ENCODE measurements at regions of chr18 and their contacts with region 1.

Region 1: GRCh38 chr18:43587538-43588153 is 310.4 kb upstream of the SYT4 start:
- DNase-seq: no peak
- H3K4me3 Mint-ChIP-seq: no peak overlapping the region
- H3K27ac Mint-ChIP-seq: no peak overlapping the region
- H3K4me1 Mint-ChIP-seq: no peaks in the 10 kb centered on the region
- H3K27me3 Mint-ChIP-seq: no peaks in the 10 kb centered on the region

Region 2: DNA sequence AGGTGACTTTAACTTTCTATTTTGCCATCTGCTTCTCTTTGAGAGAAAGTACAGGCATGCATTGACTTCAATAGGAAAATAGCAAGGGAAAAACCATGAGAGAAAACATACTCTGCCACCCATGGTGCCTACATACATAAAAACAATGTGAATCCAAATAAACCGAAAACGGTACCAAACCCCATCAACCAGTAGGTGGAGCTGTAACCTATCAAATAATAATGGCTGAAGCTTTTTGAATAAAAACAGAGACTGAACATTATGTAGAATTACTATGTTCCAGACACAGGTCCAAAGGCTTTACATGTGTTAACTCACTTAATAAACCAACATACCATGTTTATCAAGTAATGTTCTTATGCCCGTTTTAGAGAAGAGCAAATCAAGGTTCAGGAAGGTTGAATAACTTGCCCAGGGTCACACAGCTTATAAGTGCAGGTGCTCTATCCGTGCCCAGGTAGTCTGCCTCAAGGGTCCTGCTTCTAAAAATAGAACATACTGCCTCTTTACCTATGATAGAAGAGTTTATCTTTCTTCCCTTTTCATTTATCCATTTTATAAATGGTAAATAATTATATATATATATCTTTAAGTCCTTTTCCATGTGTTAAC is 16.5 kb before region 1 on chr18:
- intact Hi-C with region 1: loop called (anchors 2 kb)
- DNase-seq: no peak
- H3K4me3 Mint-ChIP-seq: no peak overlapping the region
- H3K27ac Mint-ChIP-seq: no peak overlapping the region
- H3K4me1 Mint-ChIP-seq: peaks cover 2% of the 10 kb centered on the region
- H3K27me3 Mint-ChIP-seq: no peaks in the 10 kb centered on the region